Activated CD8-positive, alpha-beta T cell treated with anti-CD3 and anti-CD28 coated beads, Interleukin-2, amount 10 ng/mL, durations not matched to agents 7 days and 5 days (primary cell): ENCODE measurements at regions of chr5 and their contacts with region 1.

Region 1: DNA sequence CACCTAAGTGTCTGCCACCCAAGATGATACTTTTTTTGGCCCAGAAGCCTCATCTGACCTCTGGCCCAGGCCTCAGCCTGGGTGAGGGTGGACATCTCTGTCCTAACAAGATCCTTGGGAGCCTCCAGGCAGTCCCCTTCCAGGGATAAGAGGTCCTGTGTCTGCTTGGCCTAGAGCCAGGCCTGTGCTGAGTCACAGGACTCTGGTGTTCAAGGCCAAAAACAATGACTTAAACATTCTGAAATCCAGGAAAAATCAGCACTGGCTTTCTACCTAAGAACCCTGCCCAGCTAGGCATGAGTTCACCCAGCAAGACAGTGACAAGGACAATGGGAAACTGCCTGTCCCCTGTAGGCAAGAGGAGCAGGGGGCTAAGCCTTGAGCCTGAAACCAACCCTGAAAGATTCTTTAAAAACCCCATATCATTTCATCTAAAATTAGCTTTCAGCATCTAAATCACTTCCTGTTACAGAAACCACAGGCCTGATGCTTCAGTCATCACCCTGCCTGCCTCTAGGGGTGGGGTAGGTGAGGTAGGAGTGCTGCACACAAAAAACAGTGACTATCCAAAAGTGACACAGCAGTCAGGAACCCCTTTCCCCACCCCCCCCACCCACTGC is 29.9 kb downstream of the CSF2 start:
- DNase-seq: peak; percentile 87
- ATAC-seq: peak; percentile 82
- H3K4me3 Mint-ChIP-seq: peak overlapping the region; percentile 48
- H3K27ac Mint-ChIP-seq: peak overlapping the region; percentile 94
- H3K4me1 Mint-ChIP-seq: peaks cover 91% of the 10 kb centered on the region
- H3K27me3 Mint-ChIP-seq: no peaks in the 10 kb centered on the region

Region 2: DNA sequence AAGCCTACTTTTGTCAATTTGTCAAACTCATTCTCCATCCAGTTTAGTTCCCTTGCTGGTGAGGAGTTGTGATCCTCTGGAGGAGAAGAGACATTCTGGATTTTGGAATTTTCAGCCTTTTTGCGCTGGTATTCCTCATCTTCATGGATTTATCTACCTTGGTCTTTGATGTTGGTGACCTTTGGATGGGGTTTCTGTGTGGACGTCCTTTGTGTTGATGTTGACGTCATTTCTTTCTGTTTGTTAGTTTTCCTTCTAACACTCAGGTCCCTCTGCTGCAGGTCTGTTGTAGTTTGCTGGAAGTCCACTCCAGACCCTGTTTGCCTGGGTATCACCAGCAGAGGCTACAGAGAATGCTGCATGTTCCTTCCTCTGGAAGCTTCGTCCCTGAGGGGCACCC is 53.0 kb after region 1 on chr5:
- CTCF ChIA-PET with region 1: no interaction called
- POLR2A ChIA-PET with region 1: no interaction called
- DNase-seq: no peak
- ATAC-seq: no peak
- H3K4me3 Mint-ChIP-seq: no peak overlapping the region
- H3K27ac Mint-ChIP-seq: no peak overlapping the region
- H3K4me1 Mint-ChIP-seq: no peaks in the 10 kb centered on the region
- H3K27me3 Mint-ChIP-seq: peaks cover 14% of the 10 kb centered on the region

Region 3: GRCh38 chr5:132180134-132180745 is 76.8 kb after region 1 on chr5:
- CTCF ChIA-PET with region 1: interaction called, 11 read pairs
- POLR2A ChIA-PET with region 1: no interaction called
- DNase-seq: peak; percentile 35
- ATAC-seq: peak; percentile 37
- H3K4me3 Mint-ChIP-seq: no peak overlapping the region
- H3K27ac Mint-ChIP-seq: no peak overlapping the region
- H3K4me1 Mint-ChIP-seq: peaks cover 47% of the 10 kb centered on the region
- H3K27me3 Mint-ChIP-seq: no peaks in the 10 kb centered on the region